H1 (cell line): ENCODE measurements at regions of chr22 and their contacts with region 1.

Region 1: GRCh38 chr22:43053176-43053575 is 36.0 kb downstream of the TTLL1 start:
- DNase-seq: peak in 1 of 2 experiments; percentile 48
- H3K4me3 ChIP-seq: no peak overlapping the region
- H3K27ac ChIP-seq: no peak overlapping the region
- H3K4me1 ChIP-seq: peaks cover 0 to 2% (median 0%) of the 10 kb centered on the region in 4 experiments; a peak in 2 of 7 replicates
- H3K27me3 ChIP-seq: no peaks in the 10 kb centered on the region
- CTCF ChIP-seq: peak; percentile 16 to 65 (median 55)
- EP300 ChIP-seq: no peak
- POLR2A ChIP-seq: no peak
- RAD21 ChIP-seq: peak; percentile 66 to 73

Region 2: DNA sequence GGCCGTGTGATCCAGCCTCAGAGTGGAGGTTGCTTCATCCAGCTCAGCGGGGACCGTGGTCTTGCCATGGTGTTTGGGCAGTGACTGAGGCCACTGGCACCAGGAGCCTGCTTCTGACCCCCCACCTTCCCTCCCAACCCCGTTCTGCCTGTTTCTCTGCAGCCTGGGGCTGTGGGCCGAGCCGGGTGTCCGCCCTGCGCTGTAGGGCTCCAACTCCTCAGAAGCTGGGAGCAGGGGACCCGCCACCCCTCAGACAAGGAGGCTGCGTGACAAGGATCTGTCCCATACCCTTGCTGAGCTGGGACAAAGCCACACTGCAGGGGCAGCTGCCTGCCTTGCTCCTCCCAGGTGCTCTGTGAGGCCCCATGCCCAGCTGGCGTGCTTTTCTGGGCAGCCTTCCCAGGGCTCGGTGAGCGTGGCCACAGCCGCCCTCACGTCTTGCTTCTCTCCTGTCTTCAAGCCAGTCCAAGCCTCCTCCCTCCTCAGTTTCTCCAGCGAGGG is 184.4 kb before region 1 on chr22:
- CTCF ChIA-PET with region 1: interaction called, 47 read pairs
- POLR2A ChIA-PET with region 1: interaction called, 5 read pairs
- DNase-seq: no peak
- H3K4me3 ChIP-seq: no peak overlapping the region
- H3K27ac ChIP-seq: no peak overlapping the region
- H3K4me1 ChIP-seq: no peaks in the 10 kb centered on the region
- H3K27me3 ChIP-seq: no peaks in the 10 kb centered on the region
- CTCF ChIP-seq: no peak
- EP300 ChIP-seq: no peak
- POLR2A ChIP-seq: no peak
- RAD21 ChIP-seq: no peak

Region 3: GRCh38 chr22:42880815-42881214 is 172.4 kb before region 1 on chr22:
- CTCF ChIA-PET with region 1: interaction called, 24 read pairs
- POLR2A ChIA-PET with region 1: no interaction called
- DNase-seq: no peak
- H3K4me3 ChIP-seq: no peak overlapping the region
- H3K27ac ChIP-seq: no peak overlapping the region
- H3K4me1 ChIP-seq: peaks cover 0 to 7% (median 4%) of the 10 kb centered on the region in 4 experiments; a peak in 6 of 7 replicates
- H3K27me3 ChIP-seq: no peaks in the 10 kb centered on the region
- CTCF ChIP-seq: peak; percentile 50 to 72 (median 66)
- EP300 ChIP-seq: no peak
- POLR2A ChIP-seq: no peak
- RAD21 ChIP-seq: peak; percentile 35 to 52

Region 4: GRCh38 chr22:42901790-42902508 is 151.2 kb before region 1 on chr22:
- CTCF ChIA-PET with region 1: interaction called, 34 read pairs
- POLR2A ChIA-PET with region 1: no interaction called
- DNase-seq: no peak
- H3K4me3 ChIP-seq: no peak overlapping the region
- H3K27ac ChIP-seq: no peak overlapping the region
- H3K4me1 ChIP-seq: peaks cover 0 to 13% (median 6%) of the 10 kb centered on the region in 4 experiments; a peak in 5 of 7 replicates
- H3K27me3 ChIP-seq: no peaks in the 10 kb centered on the region
- CTCF ChIP-seq: peak; percentile 37 to 48 (median 42)
- EP300 ChIP-seq: no peak
- POLR2A ChIP-seq: no peak
- RAD21 ChIP-seq: peak in 1 of 2 experiments; percentile 37; a peak in 1 of 4 replicates

Region 5: GRCh38 chr22:42910221-42910942 is 142.8 kb before region 1 on chr22:
- CTCF ChIA-PET with region 1: interaction called, 34 read pairs
- POLR2A ChIA-PET with region 1: no interaction called
- DNase-seq: no peak
- H3K4me3 ChIP-seq: no peak overlapping the region
- H3K27ac ChIP-seq: no peak overlapping the region
- H3K4me1 ChIP-seq: peaks cover 2 to 12% (median 7%) of the 10 kb centered on the region in 4 experiments
- H3K27me3 ChIP-seq: no peaks in the 10 kb centered on the region
- CTCF ChIP-seq: peak in 1 of 3 experiments; percentile 6; a peak in 1 of 4 replicates
- EP300 ChIP-seq: no peak
- POLR2A ChIP-seq: no peak
- RAD21 ChIP-seq: peak in 1 of 2 experiments; percentile 19; a peak in 1 of 4 replicates

Region 6: DNA sequence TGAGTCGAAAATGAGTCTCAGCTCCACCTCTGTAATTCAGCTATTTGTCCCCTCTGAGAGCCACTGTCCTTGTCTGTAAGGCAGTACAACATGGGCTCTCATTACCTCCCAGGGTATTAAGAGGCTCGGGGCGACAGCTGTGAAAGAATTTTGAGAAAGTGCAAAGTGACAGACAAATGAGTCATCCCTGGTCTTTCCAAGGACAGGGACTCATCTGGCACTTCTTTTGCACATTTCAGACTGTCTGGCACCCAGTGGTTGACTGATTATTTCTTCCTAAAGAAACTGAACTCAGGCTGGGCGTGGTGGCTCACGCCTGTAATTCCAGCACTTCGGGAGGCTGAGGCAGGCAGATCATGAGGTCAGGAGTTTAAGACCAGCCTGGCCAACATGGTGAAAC is 134.0 kb before region 1 on chr22:
- CTCF ChIA-PET with region 1: interaction called, 10 read pairs
- POLR2A ChIA-PET with region 1: interaction called, 3 read pairs
- DNase-seq: no peak
- H3K4me3 ChIP-seq: no peak overlapping the region
- H3K27ac ChIP-seq: no peak overlapping the region
- H3K4me1 ChIP-seq: peaks cover 13 to 26% (median 22%) of the 10 kb centered on the region in 4 experiments
- H3K27me3 ChIP-seq: no peaks in the 10 kb centered on the region
- CTCF ChIP-seq: no peak
- EP300 ChIP-seq: no peak
- POLR2A ChIP-seq: no peak
- RAD21 ChIP-seq: no peak

Region 7: DNA sequence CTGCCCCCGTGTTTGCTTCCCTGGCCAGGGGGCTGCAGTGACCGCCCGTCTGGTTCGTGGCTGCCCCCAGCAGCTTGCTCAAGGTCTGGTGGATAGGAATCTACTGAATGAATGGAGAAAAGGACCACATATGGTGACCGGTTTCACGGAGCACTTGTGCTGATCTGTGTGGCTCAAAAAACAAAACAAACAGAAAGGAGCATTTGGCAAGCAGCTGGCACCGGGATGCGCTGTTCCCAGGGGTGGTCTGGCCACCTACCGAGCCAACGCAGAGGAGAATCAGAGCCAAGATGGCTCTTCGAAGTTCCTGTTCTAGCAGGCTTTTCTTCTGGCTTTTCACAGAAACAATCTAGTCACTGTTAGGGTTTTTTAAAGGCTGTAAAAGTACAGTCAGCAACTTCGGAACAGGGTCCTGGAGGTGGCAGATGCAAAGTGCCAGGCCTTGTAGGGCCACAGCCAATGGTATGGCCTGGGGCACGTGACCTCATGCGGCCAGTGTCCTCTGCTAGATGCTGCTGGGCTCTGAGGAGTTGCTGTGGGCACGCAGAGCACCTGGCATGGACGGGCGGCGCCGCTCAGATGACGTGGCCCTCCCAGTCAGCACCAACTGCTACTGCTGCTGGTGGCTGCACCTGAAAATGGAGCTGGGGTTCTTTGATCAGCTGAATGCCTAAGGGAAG is 10.9 kb before region 1 on chr22:
- CTCF ChIA-PET with region 1: interaction called, 13 read pairs
- POLR2A ChIA-PET with region 1: interaction called, 3 read pairs
- DNase-seq: no peak
- H3K4me3 ChIP-seq: no peak overlapping the region
- H3K27ac ChIP-seq: no peak overlapping the region
- H3K4me1 ChIP-seq: peaks cover 0 to 3% (median 0%) of the 10 kb centered on the region in 4 experiments; a peak in 2 of 7 replicates
- H3K27me3 ChIP-seq: no peaks in the 10 kb centered on the region
- CTCF ChIP-seq: no peak
- EP300 ChIP-seq: no peak
- POLR2A ChIP-seq: no peak
- RAD21 ChIP-seq: no peak

Region 8: GRCh38 chr22:43239193-43239780 is 186.1 kb after region 1 on chr22:
- CTCF ChIA-PET with region 1: no interaction called
- POLR2A ChIA-PET with region 1: no interaction called
- DNase-seq: no peak
- H3K4me3 ChIP-seq: no peak overlapping the region
- H3K27ac ChIP-seq: no peak overlapping the region
- H3K4me1 ChIP-seq: 0 out of 7 replicates have a peak, but pooled peaks cover 0 to 4% (median 0%) of the 10 kb centered on the region in 4 experiments
- H3K27me3 ChIP-seq: no peaks in the 10 kb centered on the region
- CTCF ChIP-seq: no peak
- EP300 ChIP-seq: no peak
- POLR2A ChIP-seq: no peak
- RAD21 ChIP-seq: no peak